K562 (cell line): ENCODE measurements at regions of chr14 and their contacts with region 1.

Region 1: DNA sequence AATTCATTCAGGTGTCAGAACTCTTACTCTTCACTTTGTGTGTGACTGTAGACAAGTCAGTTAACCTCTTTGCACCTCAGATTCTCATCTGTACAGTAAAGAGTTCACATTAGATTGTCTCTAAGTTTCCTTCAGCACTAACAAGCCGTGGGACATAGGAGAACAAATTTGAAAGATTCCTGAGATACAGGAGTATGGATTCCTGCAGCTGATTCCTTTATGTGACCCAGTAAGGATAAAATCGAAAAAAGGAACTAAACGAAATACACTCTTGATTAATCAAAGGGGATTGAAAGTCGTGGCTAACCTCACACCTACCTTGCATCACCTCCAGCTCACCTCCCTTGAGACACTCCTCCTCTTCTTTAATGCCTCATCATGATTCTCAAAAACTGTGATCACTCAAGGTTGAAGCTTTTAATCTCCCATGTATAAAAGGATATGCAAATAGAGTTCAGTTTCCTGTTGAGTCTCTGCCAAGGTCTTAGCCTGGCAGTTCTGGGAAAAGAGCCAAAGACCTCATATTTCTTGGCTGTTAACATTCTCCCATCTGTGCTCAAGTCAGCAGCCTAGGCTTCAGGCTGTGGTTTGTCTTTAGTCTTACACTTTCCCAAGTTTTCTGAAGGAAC is 156.6 kb downstream of the DAD1 start:
- DNase-seq: peak in 1 of 4 experiments; percentile 20
- ATAC-seq: no peak
- H3K4me3 ChIP-seq: no peak overlapping the region
- H3K27ac ChIP-seq: no peak overlapping the region
- H3K4me1 ChIP-seq: peaks cover 0 to 12% of the 10 kb centered on the region in 2 experiments; a peak in 4 of 5 replicates
- H3K27me3 ChIP-seq: no peaks in the 10 kb centered on the region; a peak in 1 of 5 replicates
- CTCF ChIP-seq: no peak
- EP300 ChIP-seq: no peak
- POLR2A ChIP-seq: no peak
- RAD21 ChIP-seq: no peak

Region 2: DNA sequence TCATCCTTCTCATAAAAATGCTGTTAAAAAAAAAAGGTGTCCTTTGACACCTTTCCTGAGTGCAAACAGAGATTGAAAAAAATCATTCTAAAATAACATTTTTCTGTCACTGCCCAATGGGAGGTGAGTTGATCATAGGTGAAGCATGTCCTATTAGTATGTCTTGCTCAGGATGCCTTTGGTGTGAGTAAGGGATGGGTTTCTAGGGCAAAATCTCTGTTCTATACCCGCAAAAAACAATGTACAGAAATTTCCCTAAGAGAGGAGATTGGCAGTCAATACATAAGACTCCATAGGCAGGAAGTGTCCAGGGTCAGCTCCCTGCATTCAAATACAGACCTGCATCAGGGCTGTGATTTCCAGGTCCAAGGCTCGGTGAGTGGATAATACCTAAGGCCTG is 38.7 kb before region 1 on chr14:
- CTCF ChIA-PET with region 1: no interaction called
- POLR2A ChIA-PET with region 1: no interaction called
- in situ Hi-C with region 1: no loop called
- intact Hi-C with region 1: loop called (anchors 2 kb)
- DNase-seq: no peak
- ATAC-seq: no peak
- H3K4me3 ChIP-seq: no peak overlapping the region
- H3K27ac ChIP-seq: no peak overlapping the region
- H3K4me1 ChIP-seq: no peaks in the 10 kb centered on the region
- H3K27me3 ChIP-seq: no peaks in the 10 kb centered on the region; a peak in 2 of 5 replicates
- CTCF ChIP-seq: no peak
- EP300 ChIP-seq: no peak
- POLR2A ChIP-seq: no peak
- RAD21 ChIP-seq: no peak

Region 3: GRCh38 chr14:22464422-22465142 is 32.1 kb after region 1 on chr14:
- CTCF ChIA-PET with region 1: no interaction called
- POLR2A ChIA-PET with region 1: interaction called, 5 read pairs
- in situ Hi-C with region 1: no loop called
- intact Hi-C with region 1: loop called (anchors 5 kb)
- DNase-seq: no peak
- ATAC-seq: no peak
- H3K4me3 ChIP-seq: no peak overlapping the region
- H3K27ac ChIP-seq: no peak overlapping the region
- H3K4me1 ChIP-seq: peaks cover 0 to 3% of the 10 kb centered on the region in 2 experiments; a peak in 3 of 5 replicates
- H3K27me3 ChIP-seq: no peaks in the 10 kb centered on the region
- CTCF ChIP-seq: no peak
- EP300 ChIP-seq: no peak
- POLR2A ChIP-seq: no peak
- RAD21 ChIP-seq: no peak